ENCODE measurements at regions of chr7 and their contacts with region 1.

Region 1: GRCh38 chr7:20158684-20159083 is 58.5 kb downstream of the MACC1 start:
- DNase-seq: peak; percentile 39
- H3K4me3 ChIP-seq: no peak overlapping the region
- H3K27ac ChIP-seq: no peak overlapping the region
- H3K4me1 ChIP-seq: no peaks in the 10 kb centered on the region
- H3K27me3 ChIP-seq: no peaks in the 10 kb centered on the region
- CTCF ChIP-seq: peak in 1 of 2 donors; percentile 18
- POLR2A ChIP-seq: no peak

Region 2: GRCh38 chr7:20407585-20408461 is 249.1 kb after region 1 on chr7:
- CTCF ChIA-PET with region 1: no interaction called
- POLR2A ChIA-PET with region 1: no interaction called
- dilution Hi-C with region 1: no loop called
- intact Hi-C with region 1: loop called (anchors 10 kb)
- DNase-seq: peak; percentile 93
- H3K4me3 ChIP-seq: no peak overlapping the region
- H3K27ac ChIP-seq: peak overlapping the region; percentile 37
- H3K4me1 ChIP-seq: peaks cover 21% of the 10 kb centered on the region
- H3K27me3 ChIP-seq: no peaks in the 10 kb centered on the region
- CTCF ChIP-seq: no peak
- POLR2A ChIP-seq: no peak

Region 3: GRCh38 chr7:20519645-20520044 is 361.0 kb after region 1 on chr7:
- CTCF ChIA-PET with region 1: no interaction called
- POLR2A ChIA-PET with region 1: no interaction called
- dilution Hi-C with region 1: no loop called
- intact Hi-C with region 1: loop called (anchors 1 kb)
- DNase-seq: peak; percentile 48
- H3K4me3 ChIP-seq: no peak overlapping the region
- H3K27ac ChIP-seq: no peak overlapping the region
- H3K4me1 ChIP-seq: peaks cover 25% of the 10 kb centered on the region
- H3K27me3 ChIP-seq: no peaks in the 10 kb centered on the region
- CTCF ChIP-seq: no peak
- POLR2A ChIP-seq: no peak

Measured in endothelial cell of umbilical vein (primary cell).